PC-9 (cell line): ENCODE measurements at regions of chr11 and their contacts with region 1.

Region 1: GRCh38 chr11:30313580-30313979 is 9.3 kb upstream of the ARL14EP start:
- DNase-seq: no peak
- H3K4me3 ChIP-seq: no peak overlapping the region
- H3K27ac ChIP-seq: no peak overlapping the region
- H3K4me1 ChIP-seq: no peaks in the 10 kb centered on the region
- H3K27me3 ChIP-seq: peaks cover 16% of the 10 kb centered on the region
- CTCF ChIP-seq: no peak

Region 2: GRCh38 chr11:30445056-30445455 is 131.5 kb after region 1 on chr11:
- CTCF ChIA-PET with region 1: no interaction called
- POLR2A ChIA-PET with region 1: interaction called, 11 read pairs
- intact Hi-C with region 1: no loop called
- DNase-seq: no peak
- H3K4me3 ChIP-seq: no peak overlapping the region
- H3K27ac ChIP-seq: no peak overlapping the region
- H3K4me1 ChIP-seq: no peaks in the 10 kb centered on the region
- H3K27me3 ChIP-seq: peaks cover 61% of the 10 kb centered on the region
- CTCF ChIP-seq: no peak